Mammary epithelial cell (primary cell): ENCODE measurements at regions of chr13 and their contacts with region 1.

Region 1: DNA sequence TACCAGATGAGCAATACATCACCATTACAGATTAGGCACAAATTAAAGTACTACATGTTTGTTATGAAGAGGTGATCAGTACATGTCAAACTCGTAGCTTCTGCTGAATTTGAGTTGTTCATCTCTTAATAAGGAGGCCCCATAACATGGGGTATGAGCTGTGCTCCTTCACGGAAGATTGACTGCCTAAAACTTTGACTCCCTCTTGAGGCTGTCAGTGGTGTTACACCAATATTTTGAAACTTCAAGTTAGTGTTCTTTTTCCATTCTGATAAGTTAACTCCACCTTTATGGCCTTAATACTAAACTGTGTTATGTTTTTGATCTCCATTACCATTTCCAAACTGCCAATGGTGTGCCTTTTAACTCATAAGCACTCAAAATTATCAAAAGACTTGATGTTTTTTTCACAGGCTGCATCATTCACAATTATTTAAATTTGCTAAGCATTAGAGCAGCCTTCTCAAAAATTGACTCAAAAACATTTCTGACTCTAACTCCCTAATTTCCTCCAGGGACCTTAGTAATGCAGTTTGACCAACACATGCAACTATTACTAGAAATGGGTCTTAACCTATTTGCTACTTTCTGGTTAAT is 1591.5 kb downstream of the PCDH9 start:
- DNase-seq: peak; percentile 2
- H3K4me3 ChIP-seq: no peak overlapping the region
- H3K27ac ChIP-seq: no peak overlapping the region
- H3K4me1 ChIP-seq: no peaks in the 10 kb centered on the region
- H3K27me3 ChIP-seq: no peaks in the 10 kb centered on the region
- CTCF ChIP-seq: peak; percentile 78 to 79

Region 2: DNA sequence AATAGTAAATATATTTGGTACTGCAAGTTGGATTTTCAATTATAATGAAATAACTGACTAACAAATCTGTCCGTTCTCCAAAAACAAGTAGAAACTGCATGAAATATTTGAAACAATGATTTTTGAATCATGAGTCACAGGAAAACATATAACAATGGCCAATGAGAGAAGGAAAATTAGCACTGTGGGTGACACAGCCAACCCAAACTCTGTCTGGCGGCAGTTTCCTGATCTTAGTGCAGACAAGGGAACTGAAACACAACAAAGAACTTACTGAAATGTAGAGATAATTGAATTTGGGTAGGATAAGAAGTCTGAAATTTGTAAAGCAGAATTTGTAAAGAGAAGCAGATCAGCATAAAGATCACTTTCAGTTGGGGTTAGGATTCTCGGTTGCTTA is 1479.8 kb before region 1 on chr13:
- CTCF ChIA-PET with region 1: no interaction called
- dilution Hi-C with region 1: no loop called
- in situ Hi-C with region 1: no loop called
- intact Hi-C with region 1: loop called (anchors 5 kb)
- DNase-seq: no peak
- H3K4me3 ChIP-seq: no peak overlapping the region
- H3K27ac ChIP-seq: no peak overlapping the region
- H3K4me1 ChIP-seq: no peaks in the 10 kb centered on the region
- H3K27me3 ChIP-seq: no peaks in the 10 kb centered on the region
- CTCF ChIP-seq: no peak

Region 3: GRCh38 chr13:64471916-64472315 is 1166.8 kb before region 1 on chr13:
- CTCF ChIA-PET with region 1: no interaction called
- dilution Hi-C with region 1: no loop called
- in situ Hi-C with region 1: loop called (anchors 25 kb)
- intact Hi-C with region 1: loop called (anchors 1 kb)
- DNase-seq: peak; percentile 10
- H3K4me3 ChIP-seq: no peak overlapping the region
- H3K27ac ChIP-seq: no peak overlapping the region
- H3K4me1 ChIP-seq: no peaks in the 10 kb centered on the region
- H3K27me3 ChIP-seq: peaks cover 3% of the 10 kb centered on the region
- CTCF ChIP-seq: peak; percentile 24 to 65

Region 4: DNA sequence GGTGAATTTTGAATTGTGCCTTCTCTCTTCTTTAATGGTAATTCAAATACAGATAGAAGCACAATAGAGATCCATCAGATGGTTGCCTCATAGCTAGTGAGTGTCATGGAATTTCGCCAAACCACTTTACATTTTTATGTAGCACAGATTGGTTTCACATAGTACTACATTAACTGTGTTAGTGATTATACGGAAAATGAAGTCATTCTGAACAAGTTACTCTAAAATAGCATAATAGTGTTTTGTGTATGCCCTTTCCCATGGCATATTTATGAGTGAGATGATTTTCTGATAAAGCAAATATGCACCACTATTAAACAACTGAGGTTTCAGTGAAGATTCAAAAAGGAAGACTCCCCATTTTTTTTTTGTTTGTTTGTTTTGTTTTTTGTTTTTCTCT is 32.0 kb before region 1 on chr13:
- CTCF ChIA-PET with region 1: no interaction called
- dilution Hi-C with region 1: no loop called
- in situ Hi-C with region 1: no loop called
- intact Hi-C with region 1: no loop called
- DNase-seq: no peak
- H3K4me3 ChIP-seq: no peak overlapping the region
- H3K27ac ChIP-seq: no peak overlapping the region
- H3K4me1 ChIP-seq: no peaks in the 10 kb centered on the region
- H3K27me3 ChIP-seq: no peaks in the 10 kb centered on the region
- CTCF ChIP-seq: no peak